Common myeloid progenitor, CD34-positive (primary cell): ENCODE measurements at regions of chr10 and their contacts with region 1.

Region 1: GRCh38 chr10:133329491-133330202 is 7.0 kb downstream of the CALY start:
- DNase-seq: peak; percentile 83 to 89 (median 83)
- H3K4me3 ChIP-seq: peak overlapping the region in 1 of 7 experiments; percentile 26
- H3K27ac ChIP-seq: no peak overlapping the region
- H3K4me1 ChIP-seq: peaks cover 0 to 21% (median 11%) of the 10 kb centered on the region in 4 experiments
- H3K27me3 ChIP-seq: peaks cover 12 to 91% (median 46%) of the 10 kb centered on the region in 5 experiments

Region 2: DNA sequence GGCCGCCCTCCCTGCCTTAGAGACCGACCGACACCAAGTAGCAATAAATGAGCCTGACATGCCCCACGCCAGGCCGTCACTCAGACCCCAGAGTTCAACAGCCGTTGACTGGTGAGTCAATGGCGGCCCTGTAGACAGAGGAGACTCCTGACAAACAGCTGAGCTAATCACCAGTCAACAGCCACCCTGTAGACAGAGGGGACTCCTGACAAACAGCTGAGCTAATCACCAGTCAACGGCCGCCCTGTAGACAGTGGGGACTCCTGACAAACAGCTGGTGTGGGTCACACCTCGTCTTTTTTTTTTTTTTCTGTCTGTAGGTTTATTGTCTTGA is 186.5 kb before region 1 on chr10:
- CTCF ChIA-PET with region 1: no interaction called
- POLR2A ChIA-PET with region 1: no interaction called
- DNase-seq: no peak
- H3K4me3 ChIP-seq: no peak overlapping the region
- H3K27ac ChIP-seq: no peak overlapping the region
- H3K4me1 ChIP-seq: peaks cover 0 to 6% (median 2%) of the 10 kb centered on the region in 4 experiments
- H3K27me3 ChIP-seq: peaks cover 0 to 18% (median 7%) of the 10 kb centered on the region in 5 experiments

Region 3: GRCh38 chr10:133186416-133187090 is 143.1 kb before region 1 on chr10:
- CTCF ChIA-PET with region 1: no interaction called
- POLR2A ChIA-PET with region 1: no interaction called
- DNase-seq: no peak
- H3K4me3 ChIP-seq: no peak overlapping the region
- H3K27ac ChIP-seq: no peak overlapping the region
- H3K4me1 ChIP-seq: no peaks in the 10 kb centered on the region
- H3K27me3 ChIP-seq: peaks cover 0 to 11% (median 2%) of the 10 kb centered on the region in 5 experiments

Region 4: DNA sequence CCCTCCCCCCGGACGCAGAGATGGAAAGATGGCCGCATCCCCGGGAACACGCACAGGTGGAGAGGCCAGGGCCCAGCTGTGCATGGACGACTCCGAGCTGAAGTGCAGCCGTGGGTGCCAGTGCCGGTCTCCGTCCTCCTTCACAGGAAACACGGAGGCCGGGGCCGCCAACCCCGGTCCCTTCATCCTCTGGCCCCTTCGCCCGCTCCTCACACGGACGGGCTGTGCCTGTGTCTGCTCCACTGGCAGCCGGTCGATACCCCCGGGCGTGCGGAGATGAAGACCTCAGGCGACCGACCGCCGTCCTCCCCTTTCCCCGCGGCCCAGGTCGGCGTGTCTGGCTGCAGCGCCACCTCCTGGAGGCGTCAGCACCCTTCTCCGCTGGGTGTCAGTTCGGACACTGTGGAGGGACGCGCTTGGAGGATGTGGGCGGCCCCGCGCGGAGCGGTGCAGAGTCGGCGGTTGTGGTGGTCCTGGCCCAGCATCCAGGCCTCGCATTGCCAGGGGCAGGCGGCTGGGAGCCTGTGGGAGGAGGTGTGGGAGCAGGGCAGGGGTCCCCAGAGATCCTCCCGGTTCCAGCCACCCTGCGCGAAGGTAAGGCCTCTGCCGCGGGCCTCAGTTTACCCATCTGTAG is 11.0 kb before region 1 on chr10:
- CTCF ChIA-PET with region 1: interaction called, 14 read pairs
- POLR2A ChIA-PET with region 1: no interaction called
- DNase-seq: peak; percentile 69 to 74 (median 73)
- H3K4me3 ChIP-seq: peak overlapping the region in 6 of 7 experiments; percentile 19 to 73 (median 52)
- H3K27ac ChIP-seq: no peak overlapping the region
- H3K4me1 ChIP-seq: peaks cover 0 to 7% (median 1%) of the 10 kb centered on the region in 4 experiments
- H3K27me3 ChIP-seq: peaks cover 0 to 12% (median 2%) of the 10 kb centered on the region in 5 experiments

Region 5: GRCh38 chr10:133378251-133379096 is 48.8 kb after region 1 on chr10:
- CTCF ChIA-PET with region 1: interaction called, 10 read pairs
- POLR2A ChIA-PET with region 1: no interaction called
- DNase-seq: peak in 2 of 3 donors; percentile 54 to 70
- H3K4me3 ChIP-seq: peak overlapping the region; percentile 43 to 81 (median 72)
- H3K27ac ChIP-seq: no peak overlapping the region
- H3K4me1 ChIP-seq: peaks cover 0 to 47% (median 35%) of the 10 kb centered on the region in 4 experiments
- H3K27me3 ChIP-seq: peaks cover 0 to 3% (median 0%) of the 10 kb centered on the region in 5 experiments

Region 6: GRCh38 chr10:133453516-133454203 is 124.0 kb after region 1 on chr10 and contains the start of gene SCART1:
- CTCF ChIA-PET with region 1: no interaction called
- POLR2A ChIA-PET with region 1: no interaction called
- DNase-seq: no peak
- H3K4me3 ChIP-seq: no peak within 1 kb of the TSS
- H3K27ac ChIP-seq: no peak within 1 kb of the TSS
- H3K4me1 ChIP-seq: no peaks in the 10 kb centered on the region
- H3K27me3 ChIP-seq: no peaks in the 10 kb centered on the region